Natural killer cell (primary cell): ENCODE measurements at regions of chr1 and their contacts with region 1.

Region 1: DNA sequence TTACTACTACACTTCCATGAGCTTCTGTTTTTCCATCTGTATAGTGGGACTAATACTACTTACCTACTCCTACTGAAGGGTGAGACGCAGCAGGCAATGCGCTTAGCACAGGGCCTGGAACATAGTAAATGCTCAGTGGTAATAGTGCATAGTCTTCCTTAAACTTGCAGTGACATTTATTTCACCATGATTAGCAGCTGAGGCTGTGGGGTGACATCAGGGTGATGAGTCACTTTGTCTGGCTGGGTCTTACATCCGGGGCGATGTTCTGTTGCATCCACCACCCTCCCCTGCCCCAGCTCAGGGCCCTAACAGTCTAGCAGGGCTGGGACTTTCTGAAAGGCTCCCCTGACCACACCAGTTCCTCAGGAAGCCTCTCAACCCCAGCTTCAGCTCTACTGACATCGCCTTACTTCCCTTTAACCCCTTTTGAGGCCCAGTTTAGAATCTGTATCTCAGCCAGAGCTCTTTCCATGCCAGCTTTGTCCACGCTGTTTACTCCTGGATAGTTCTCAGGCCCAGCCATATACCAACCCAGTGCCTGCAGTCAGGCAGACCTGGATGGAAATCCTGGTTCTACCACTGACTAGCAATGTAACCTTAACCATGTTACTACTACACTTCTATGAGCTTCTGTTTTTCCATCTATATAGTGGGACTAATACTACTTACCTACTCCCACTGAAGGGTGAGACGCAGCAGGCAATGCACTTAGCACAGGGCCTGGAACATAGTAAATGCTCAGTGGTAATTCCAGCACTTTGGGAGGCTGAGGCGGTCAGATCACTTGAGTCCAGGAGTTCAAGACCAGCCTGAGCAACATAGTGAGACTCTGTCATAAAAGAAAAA is 66.3 kb downstream of the CD58 start:
- DNase-seq: peak; percentile 81 to 95
- ATAC-seq: peak; percentile 82 to 97 (median 93)
- H3K4me3 ChIP-seq: no peak overlapping the region
- H3K4me3 Mint-ChIP-seq: peak overlapping the region; percentile 75
- H3K27ac ChIP-seq: peak overlapping the region; percentile 84
- H3K27ac Mint-ChIP-seq: peak overlapping the region; percentile 98 to 99
- H3K4me1 ChIP-seq: peaks cover 61% of the 10 kb centered on the region
- H3K4me1 Mint-ChIP-seq: peaks cover 78 to 80% of the 10 kb centered on the region in 2 donors
- H3K27me3 ChIP-seq: no peaks in the 10 kb centered on the region
- H3K27me3 Mint-ChIP-seq: no peaks in the 10 kb centered on the region
- CTCF ChIP-seq: no peak

Region 2: GRCh38 chr1:116372587-116373444 is 131.7 kb before region 1 on chr1 and contains the start of gene ATP1A1:
- intact Hi-C with region 1: loop called (anchors 2 kb)
- DNase-seq: peak; percentile 98 to 99
- ATAC-seq: peak; percentile 80 to 93 (median 89)
- H3K4me3 ChIP-seq: peak within 1 kb of the TSS; percentile 75
- H3K4me3 Mint-ChIP-seq: peak within 1 kb of the TSS; percentile 95
- H3K27ac ChIP-seq: peak within 1 kb of the TSS; percentile 86
- H3K27ac Mint-ChIP-seq: peak within 1 kb of the TSS; percentile 88 to 93
- H3K4me1 ChIP-seq: peaks cover 39% of the 10 kb centered on the region
- H3K4me1 Mint-ChIP-seq: peaks cover 45 to 50% of the 10 kb centered on the region in 2 donors
- H3K27me3 ChIP-seq: no peaks in the 10 kb centered on the region
- H3K27me3 Mint-ChIP-seq: no peaks in the 10 kb centered on the region
- CTCF ChIP-seq: no peak
- total RNA-seq, gene ATP1A1: 134 to 144 (median 140) TPM

Region 3: DNA sequence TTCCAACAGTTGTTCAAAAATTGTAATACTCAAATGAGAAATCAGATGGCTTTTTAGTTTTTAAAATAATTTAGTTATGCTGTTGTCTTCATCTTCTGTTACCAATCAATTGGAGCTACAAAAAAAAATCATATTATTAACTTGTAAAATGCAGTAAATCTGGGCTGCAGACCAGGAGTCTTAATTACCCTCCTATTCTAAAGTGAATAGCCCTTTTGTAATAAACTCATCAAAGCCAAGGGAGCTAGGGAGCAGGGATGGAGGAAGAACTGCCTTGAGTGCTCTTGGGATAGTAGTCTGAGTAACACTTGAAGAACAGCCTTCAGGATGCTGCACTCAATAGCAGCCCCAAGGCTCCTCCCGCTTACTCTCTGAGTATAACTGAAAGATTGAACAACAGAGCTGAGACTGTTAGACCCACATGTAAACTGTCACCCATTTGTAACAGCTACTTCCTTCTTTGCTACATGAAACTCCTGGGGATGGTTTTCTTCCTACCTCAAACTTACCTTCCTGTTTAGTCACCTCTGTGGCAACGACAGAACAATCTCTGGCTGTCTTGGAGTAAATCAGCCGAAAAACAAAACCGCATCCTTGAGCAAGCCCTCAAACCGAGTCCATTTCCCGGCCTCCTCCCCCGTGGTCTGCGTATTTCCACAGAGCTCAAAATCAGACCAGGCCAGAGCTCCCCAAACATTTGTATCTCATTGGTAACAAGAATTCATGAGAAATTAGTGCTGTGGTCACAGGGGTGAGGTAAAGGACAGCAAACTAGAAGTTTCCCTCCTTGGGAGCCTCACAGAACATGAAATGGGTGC is 10.4 kb after region 1 on chr1:
- intact Hi-C with region 1: loop called (anchors 1 kb)
- DNase-seq: peak; percentile 54 to 83
- ATAC-seq: peak; percentile 75 to 86 (median 76)
- H3K4me3 ChIP-seq: no peak overlapping the region
- H3K4me3 Mint-ChIP-seq: peak overlapping the region; percentile 82
- H3K27ac ChIP-seq: peak overlapping the region; percentile 88
- H3K27ac Mint-ChIP-seq: peak overlapping the region; percentile 99 to 100
- H3K4me1 ChIP-seq: peaks cover 54% of the 10 kb centered on the region
- H3K4me1 Mint-ChIP-seq: peaks cover 68 to 69% of the 10 kb centered on the region in 2 donors
- H3K27me3 ChIP-seq: no peaks in the 10 kb centered on the region
- H3K27me3 Mint-ChIP-seq: no peaks in the 10 kb centered on the region
- CTCF ChIP-seq: no peak

Region 4: DNA sequence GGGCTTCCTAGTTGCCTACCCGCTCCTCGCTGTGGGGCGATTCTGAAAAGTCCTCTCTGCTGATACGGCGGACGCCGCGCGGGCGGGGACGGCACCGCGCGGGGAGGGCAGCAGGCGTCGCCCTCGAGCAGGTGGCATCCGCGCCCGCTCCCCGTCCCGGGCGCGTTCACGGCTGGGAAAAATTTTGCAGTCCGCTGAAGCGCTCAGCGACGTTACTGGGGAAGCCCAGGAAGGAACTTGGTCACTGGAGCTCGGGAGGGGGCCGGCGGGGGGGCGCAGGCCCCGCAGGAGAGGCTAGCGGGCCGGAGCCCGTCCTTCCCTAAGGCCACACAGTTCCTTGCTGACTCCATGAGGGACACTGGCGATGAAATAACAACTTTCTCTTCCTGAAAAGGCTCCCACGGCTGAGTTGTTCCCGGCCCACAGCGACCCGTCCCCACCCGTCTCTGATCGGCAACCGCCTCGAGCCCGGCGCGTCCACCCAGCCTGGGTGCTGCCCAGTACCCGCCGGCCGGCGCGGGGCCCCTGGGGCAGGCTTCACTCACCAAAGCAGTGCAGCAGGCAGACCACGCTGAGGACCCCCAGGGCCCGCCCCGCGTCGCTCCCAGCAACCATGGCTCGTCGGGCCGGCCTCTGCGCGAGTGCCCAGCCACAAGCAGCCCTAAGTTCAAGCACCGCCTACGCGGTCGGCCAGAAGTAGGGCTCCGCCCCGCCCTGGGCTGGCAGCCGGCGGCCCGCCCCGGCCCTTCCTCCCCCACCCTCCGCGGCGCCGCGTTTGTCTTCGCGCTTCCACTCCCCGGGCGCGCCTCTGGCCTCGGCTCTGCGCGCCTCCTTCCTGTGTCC is 66.0 kb after region 1 on chr1 and contains the start of gene CD58:
- intact Hi-C with region 1: loop called (anchors 1 kb)
- DNase-seq: peak; percentile 79 to 89
- ATAC-seq: peak; percentile 79 to 92 (median 86)
- H3K4me3 ChIP-seq: peak within 1 kb of the TSS; percentile 72
- H3K4me3 Mint-ChIP-seq: peak within 1 kb of the TSS; percentile 86
- H3K27ac ChIP-seq: peak within 1 kb of the TSS; percentile 82
- H3K27ac Mint-ChIP-seq: peak within 1 kb of the TSS; percentile 82 to 90
- H3K4me1 ChIP-seq: peaks cover 28% of the 10 kb centered on the region
- H3K4me1 Mint-ChIP-seq: peaks cover 56 to 60% of the 10 kb centered on the region in 2 donors
- H3K27me3 ChIP-seq: no peaks in the 10 kb centered on the region
- H3K27me3 Mint-ChIP-seq: peaks cover 4 to 11% of the 10 kb centered on the region in 2 donors
- CTCF ChIP-seq: peak; percentile 75
- total RNA-seq, gene CD58: 27.4 to 34.0 (median 28.6) TPM